PC-3 (cell line): ENCODE measurements at regions of chr2 and their contacts with region 1.

Region 1: GRCh38 chr2:84925724-84926376 is 20.4 kb downstream of the TMSB10 start:
- DNase-seq: peak; percentile 98
- ATAC-seq: peak; percentile 86
- H3K4me3 ChIP-seq: peak overlapping the region; percentile 74
- H3K27ac ChIP-seq: peak overlapping the region; percentile 80
- H3K4me1 ChIP-seq: peaks cover 20% of the 10 kb centered on the region
- H3K27me3 ChIP-seq: no peaks in the 10 kb centered on the region
- CTCF ChIP-seq: peak; percentile 99

Region 2: GRCh38 chr2:84631047-84631446 is 294.8 kb before region 1 on chr2:
- CTCF ChIA-PET with region 1: no interaction called
- POLR2A ChIA-PET with region 1: no interaction called
- intact Hi-C with region 1: loop called (anchors 5 kb)
- DNase-seq: peak; percentile 63
- ATAC-seq: peak; percentile 81
- H3K4me3 ChIP-seq: no peak overlapping the region
- H3K27ac ChIP-seq: no peak overlapping the region
- H3K4me1 ChIP-seq: no peaks in the 10 kb centered on the region
- H3K27me3 ChIP-seq: peaks cover 38% of the 10 kb centered on the region
- CTCF ChIP-seq: peak; percentile 78

Region 3: DNA sequence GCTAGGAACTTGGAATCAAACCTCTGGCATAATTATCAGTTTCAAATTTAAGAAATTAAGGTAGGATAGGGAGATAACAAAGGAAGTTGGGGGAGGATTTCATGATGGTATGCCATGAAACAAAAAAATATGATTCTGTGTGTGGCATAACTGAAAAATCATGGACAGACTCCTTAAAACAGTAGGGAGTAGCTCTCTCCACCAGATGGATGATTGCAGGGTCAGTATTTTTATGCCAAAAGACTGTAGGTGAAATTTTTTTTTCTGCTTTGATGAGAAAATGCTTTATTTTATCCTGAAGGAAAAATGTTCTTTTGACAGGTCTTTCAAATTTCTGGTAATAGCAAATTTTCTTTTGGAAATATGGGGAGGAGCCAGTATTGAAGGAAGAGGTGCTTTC is 139.2 kb before region 1 on chr2:
- CTCF ChIA-PET with region 1: no interaction called
- POLR2A ChIA-PET with region 1: no interaction called
- intact Hi-C with region 1: no loop called
- DNase-seq: no peak
- ATAC-seq: no peak
- H3K4me3 ChIP-seq: no peak overlapping the region
- H3K27ac ChIP-seq: no peak overlapping the region
- H3K4me1 ChIP-seq: peaks cover 10% of the 10 kb centered on the region; the same call in 1 of the 2 replicates
- H3K27me3 ChIP-seq: no peaks in the 10 kb centered on the region
- CTCF ChIP-seq: no peak

Region 4: GRCh38 chr2:84905181-84906107 is 20.4 kb before region 1 on chr2 and contains the start of gene TMSB10:
- CTCF ChIA-PET with region 1: interaction called, 11 read pairs
- POLR2A ChIA-PET with region 1: interaction called, 15 read pairs
- intact Hi-C with region 1: loop called (anchors 1 kb)
- DNase-seq: peak; percentile 87
- ATAC-seq: peak; percentile 59
- H3K4me3 ChIP-seq: peak within 1 kb of the TSS; percentile 83
- H3K27ac ChIP-seq: peak within 1 kb of the TSS; percentile 62
- H3K4me1 ChIP-seq: peaks cover 13% of the 10 kb centered on the region
- H3K27me3 ChIP-seq: no peaks in the 10 kb centered on the region
- CTCF ChIP-seq: peak; percentile 32; the same call in 1 of the 2 replicates
- total RNA-seq, gene TMSB10: 4,758 and 5,246 TPM in 2 replicates

Region 5: DNA sequence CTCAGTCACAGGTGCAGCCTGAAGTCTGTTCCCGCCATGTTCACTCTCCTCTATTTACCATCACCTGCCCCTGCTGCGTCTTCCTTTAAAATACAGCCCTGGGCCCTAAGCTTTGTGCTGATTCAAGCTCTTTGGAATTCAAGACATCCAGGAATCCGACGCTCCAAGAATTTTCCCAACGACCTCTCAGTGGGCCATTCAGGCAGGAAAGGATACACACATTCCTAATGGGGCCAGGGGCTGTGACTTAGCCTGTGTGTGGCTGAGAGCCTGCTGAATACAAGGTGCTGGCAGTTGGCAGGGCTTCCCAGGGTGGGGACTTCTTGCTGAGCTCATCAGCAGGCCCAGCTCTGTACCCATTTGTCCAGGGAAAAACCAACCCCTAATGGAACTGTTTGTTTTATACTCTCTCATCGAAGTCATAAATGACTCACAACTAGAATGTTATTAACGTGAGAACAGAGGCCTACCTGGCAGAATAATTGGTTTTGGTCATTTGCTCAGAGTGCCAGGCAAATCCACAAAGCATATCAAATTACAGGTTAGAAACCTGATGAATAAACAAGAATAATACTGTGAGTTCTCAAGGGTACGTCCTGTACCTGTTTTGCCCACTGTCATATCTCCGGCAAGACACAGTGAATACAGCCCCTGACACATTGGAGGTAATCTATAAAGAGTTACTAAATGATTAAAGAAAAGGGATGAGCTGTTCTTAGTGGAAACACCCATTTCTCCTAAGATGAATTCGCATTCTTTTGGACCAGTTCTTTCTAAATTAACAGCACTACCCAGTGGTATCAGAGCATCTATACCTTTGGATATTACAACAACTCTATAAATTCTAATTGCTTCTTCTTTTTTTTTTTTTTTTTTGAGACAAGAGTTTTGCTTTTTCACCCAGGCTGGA is 32.5 kb after region 1 on chr2:
- CTCF ChIA-PET with region 1: interaction called, 21 read pairs
- POLR2A ChIA-PET with region 1: interaction called, 8 read pairs
- intact Hi-C with region 1: loop called (anchors 1 kb)
- DNase-seq: peak; percentile 99
- ATAC-seq: peak; percentile 92
- H3K4me3 ChIP-seq: peak overlapping the region; percentile 41; the same call in 1 of the 2 replicates
- H3K27ac ChIP-seq: peak overlapping the region; percentile 99
- H3K4me1 ChIP-seq: peaks cover 42% of the 10 kb centered on the region
- H3K27me3 ChIP-seq: no peaks in the 10 kb centered on the region
- CTCF ChIP-seq: no peak

Region 6: DNA sequence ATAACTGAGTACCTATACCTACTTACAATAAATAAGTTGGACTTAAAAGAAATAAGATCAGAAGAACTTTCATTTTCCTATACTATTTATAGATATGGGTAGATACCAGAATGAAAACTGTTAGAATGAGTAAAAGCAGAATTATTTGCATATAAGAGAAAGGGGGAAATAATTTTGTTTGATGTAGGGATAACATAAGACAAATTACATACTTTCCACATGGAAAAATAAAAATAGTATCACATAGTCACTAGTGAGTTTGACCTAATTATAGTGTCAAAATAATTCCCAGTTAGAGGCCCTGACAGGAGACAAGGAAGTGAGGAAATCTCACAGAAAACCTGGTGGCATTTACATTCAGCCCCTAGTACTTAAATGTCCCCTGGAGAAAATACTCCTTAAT is 73.7 kb after region 1 on chr2:
- CTCF ChIA-PET with region 1: no interaction called
- POLR2A ChIA-PET with region 1: interaction called, 11 read pairs
- intact Hi-C with region 1: no loop called
- DNase-seq: no peak
- ATAC-seq: no peak
- H3K4me3 ChIP-seq: no peak overlapping the region
- H3K27ac ChIP-seq: no peak overlapping the region
- H3K4me1 ChIP-seq: peaks cover 36% of the 10 kb centered on the region
- H3K27me3 ChIP-seq: no peaks in the 10 kb centered on the region
- CTCF ChIP-seq: no peak

Region 7: GRCh38 chr2:85017411-85018048 is 91.7 kb after region 1 on chr2:
- CTCF ChIA-PET with region 1: interaction called, 14 read pairs
- POLR2A ChIA-PET with region 1: interaction called, 4 read pairs
- intact Hi-C with region 1: loop called (anchors 1 kb)
- DNase-seq: peak; percentile 53
- ATAC-seq: no peak
- H3K4me3 ChIP-seq: no peak overlapping the region
- H3K27ac ChIP-seq: peak overlapping the region; percentile 91
- H3K4me1 ChIP-seq: peaks cover 41% of the 10 kb centered on the region
- H3K27me3 ChIP-seq: no peaks in the 10 kb centered on the region
- CTCF ChIP-seq: peak; percentile 52; the same call in 1 of the 2 replicates